Left lung (tissue), 14 donors: ENCODE measurements at regions of chr19 and their contacts with region 1.

Region 1: GRCh38 chr19:38239816-38240215 is 15.8 kb upstream of the DPF1 start:
- DNase-seq: no peak
- ATAC-seq: no peak
- H3K4me3 ChIP-seq: no peak overlapping the region
- H3K27ac ChIP-seq: no peak overlapping the region
- H3K4me1 ChIP-seq: peaks cover 0 to 8% of the 10 kb centered on the region in 2 donors
- H3K27me3 ChIP-seq: peaks cover 0 to 8% of the 10 kb centered on the region in 2 donors
- CTCF ChIP-seq: no peak

Region 2: GRCh38 chr19:38335949-38336637 is 96.3 kb after region 1 on chr19:
- intact Hi-C with region 1: loop called in 1 of 2 experiments (anchors 2 kb)
- DNase-seq: peak; percentile 89 to 99 (median 96)
- ATAC-seq: peak; percentile 88
- H3K4me3 ChIP-seq: peak overlapping the region; percentile 52 to 66
- H3K27ac ChIP-seq: peak overlapping the region; percentile 92 to 94
- H3K4me1 ChIP-seq: peaks cover 3 to 17% of the 10 kb centered on the region in 2 donors
- H3K27me3 ChIP-seq: no peaks in the 10 kb centered on the region
- CTCF ChIP-seq: no peak

Region 3: GRCh38 chr19:38361633-38362075 is 121.8 kb after region 1 on chr19:
- intact Hi-C with region 1: no loop called
- DNase-seq: peak; percentile 66 to 91 (median 84)
- ATAC-seq: peak; percentile 94
- H3K4me3 ChIP-seq: peak overlapping the region; percentile 54 to 66
- H3K27ac ChIP-seq: no peak overlapping the region
- H3K4me1 ChIP-seq: peaks cover 5 to 22% of the 10 kb centered on the region in 2 donors
- H3K27me3 ChIP-seq: peaks cover 4 to 54% of the 10 kb centered on the region in 2 donors
- CTCF ChIP-seq: no peak